Activated CD8-positive, alpha-beta memory T cell treated with anti-CD3 and anti-CD28 coated beads, Interleukin-2, amount 10 ng/mL, durations not matched to agents 7 days and 5 days (primary cell): ENCODE measurements at regions of chr17 and their contacts with region 1.

Region 1: DNA sequence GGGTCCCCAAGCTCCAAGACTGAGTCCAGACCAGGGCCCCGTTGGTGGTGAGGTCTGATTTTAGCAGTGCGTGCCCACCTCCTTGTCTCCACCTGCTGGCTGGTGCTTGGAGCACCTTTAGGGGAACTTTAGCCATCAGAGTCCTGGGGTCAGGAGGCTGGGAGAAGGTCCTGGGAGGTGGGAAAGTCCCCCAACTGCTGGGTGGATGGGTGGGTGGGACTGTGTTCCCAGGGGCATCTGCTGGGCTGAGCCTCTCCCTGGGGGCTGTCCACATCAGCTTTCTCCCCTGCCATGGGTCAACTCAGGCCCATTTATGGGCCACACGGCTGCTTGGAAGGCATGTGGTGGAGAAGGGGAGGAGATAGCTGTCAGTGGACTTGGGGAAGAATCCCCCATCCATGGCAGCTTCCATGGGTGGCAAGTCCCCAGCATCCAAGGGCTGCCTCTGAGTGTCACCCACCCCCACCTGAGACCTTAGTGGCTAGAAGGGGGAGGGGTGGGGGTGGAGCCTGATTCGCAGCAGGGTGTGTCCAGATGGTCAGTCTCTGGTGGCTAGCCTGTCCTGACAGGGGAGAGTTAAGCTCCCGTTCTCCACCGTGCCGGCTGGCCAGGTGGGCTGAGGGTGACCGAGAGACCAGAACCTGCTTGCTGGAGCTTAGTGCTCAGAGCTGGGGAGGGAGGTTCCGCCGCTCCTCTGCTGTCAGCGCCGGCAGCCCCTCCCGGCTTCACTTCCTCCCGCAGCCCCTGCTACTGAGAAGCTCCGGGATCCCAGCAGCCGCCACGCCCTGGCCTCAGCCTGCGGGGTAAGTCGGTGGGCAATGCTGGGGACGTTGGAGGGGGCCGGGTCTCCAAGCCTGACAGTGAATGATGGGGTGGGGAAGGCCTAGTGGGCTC is at the start of gene TRPV2:
- DNase-seq: peak; percentile 80
- ATAC-seq: peak; percentile 45
- H3K4me3 Mint-ChIP-seq: peak within 1 kb of the TSS; percentile 98
- H3K27ac Mint-ChIP-seq: peak within 1 kb of the TSS; percentile 99
- H3K4me1 Mint-ChIP-seq: peaks cover 51% of the 10 kb centered on the region
- H3K27me3 Mint-ChIP-seq: no peaks in the 10 kb centered on the region
- total RNA-seq, gene TRPV2: 124 to 129 TPM

Region 2: GRCh38 chr17:16380640-16381495 is 34.4 kb before region 1 on chr17 and contains the start of gene UBB:
- CTCF ChIA-PET with region 1: interaction called, 33 read pairs
- DNase-seq: peak; percentile 98
- ATAC-seq: peak; percentile 92
- H3K4me3 Mint-ChIP-seq: peak within 1 kb of the TSS; percentile 93
- H3K27ac Mint-ChIP-seq: peak within 1 kb of the TSS; percentile 97
- H3K4me1 Mint-ChIP-seq: peaks cover 33% of the 10 kb centered on the region
- H3K27me3 Mint-ChIP-seq: no peaks in the 10 kb centered on the region
- total RNA-seq, gene UBB: 1,297 to 1,567 TPM

Region 3: DNA sequence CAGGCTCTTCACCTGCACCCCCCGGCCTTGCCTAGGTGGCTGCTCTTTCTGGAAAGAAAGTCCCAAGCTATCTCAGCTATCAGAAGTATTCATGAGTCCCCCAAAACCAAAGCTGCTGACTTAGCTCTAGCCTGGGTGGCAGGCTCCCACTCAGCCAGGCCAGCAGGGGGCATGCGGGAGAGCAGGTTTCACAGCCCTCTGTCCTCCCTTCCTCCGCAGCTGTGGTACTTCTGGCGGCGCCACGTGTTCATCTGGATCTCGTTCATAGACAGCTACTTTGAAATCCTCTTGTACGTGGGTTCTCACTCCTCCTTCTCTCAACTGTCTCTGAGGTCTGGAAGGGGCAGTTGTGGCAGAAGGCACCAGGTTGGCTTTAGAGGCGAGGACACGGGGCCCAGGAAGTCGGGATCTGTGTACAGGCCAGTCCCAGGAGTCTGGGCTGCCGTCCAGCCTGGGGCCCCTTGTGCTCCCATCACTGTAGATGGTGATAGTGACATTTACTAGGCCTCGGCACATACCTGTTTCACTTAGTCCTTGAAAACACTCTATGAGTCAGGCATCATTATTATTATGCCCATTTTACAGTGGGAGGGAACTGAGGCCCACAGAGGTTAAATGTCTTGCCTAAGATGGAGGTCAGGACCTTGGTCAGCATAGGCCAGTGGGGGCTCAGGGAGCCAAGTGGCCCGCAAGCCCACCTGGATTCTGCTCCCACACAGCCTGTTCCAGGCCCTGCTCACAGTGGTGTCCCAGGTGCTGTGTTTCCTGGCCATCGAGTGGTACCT is 13.0 kb after region 1 on chr17:
- CTCF ChIA-PET with region 1: interaction called, 13 read pairs
- DNase-seq: no peak
- ATAC-seq: peak; percentile 67
- H3K4me3 Mint-ChIP-seq: no peak overlapping the region
- H3K27ac Mint-ChIP-seq: no peak overlapping the region
- H3K4me1 Mint-ChIP-seq: no peaks in the 10 kb centered on the region
- H3K27me3 Mint-ChIP-seq: no peaks in the 10 kb centered on the region

Region 4: DNA sequence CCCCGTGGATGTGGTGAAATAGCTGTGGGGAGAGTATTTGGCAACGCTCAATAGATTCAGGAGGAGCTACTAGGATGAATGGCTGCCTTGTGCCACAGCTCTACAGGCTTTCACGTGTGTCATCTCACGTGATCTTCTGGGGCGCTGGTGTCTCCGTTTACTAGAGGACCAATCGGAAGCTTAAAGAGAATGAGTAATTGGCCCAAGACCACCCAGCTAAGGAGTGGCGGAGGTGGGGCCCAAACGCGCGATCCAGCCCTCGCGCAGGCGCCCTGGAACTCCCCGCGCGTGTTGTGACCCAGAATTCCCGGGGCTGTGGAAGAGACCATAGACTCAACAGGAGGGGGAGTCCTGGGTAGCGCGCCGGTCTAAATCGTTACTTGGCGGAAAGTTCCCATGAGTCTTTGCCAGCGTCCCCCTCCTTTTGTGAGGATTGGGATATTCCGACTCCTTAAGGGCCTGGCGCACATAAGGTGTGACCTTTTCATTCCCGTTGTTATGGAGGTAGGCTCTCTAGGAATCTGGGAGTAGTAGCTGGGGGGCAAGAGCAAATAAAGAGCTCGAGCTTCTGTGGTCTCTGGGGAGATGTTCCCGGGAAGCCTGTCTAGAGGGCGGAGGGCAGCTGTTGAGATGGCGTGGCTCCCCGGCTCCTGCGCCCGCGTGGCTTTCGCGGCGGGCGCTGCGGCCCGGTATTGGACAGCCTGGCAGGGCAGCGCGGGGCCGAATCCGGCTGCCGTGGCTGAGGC is 23.5 kb after region 1 on chr17:
- CTCF ChIA-PET with region 1: interaction called, 18 read pairs
- DNase-seq: peak; percentile 98
- ATAC-seq: peak; percentile 88
- H3K4me3 Mint-ChIP-seq: peak overlapping the region; percentile 98
- H3K27ac Mint-ChIP-seq: peak overlapping the region; percentile 98
- H3K4me1 Mint-ChIP-seq: peaks cover 45% of the 10 kb centered on the region
- H3K27me3 Mint-ChIP-seq: no peaks in the 10 kb centered on the region

Region 5: GRCh38 chr17:16506188-16506587 is 90.9 kb after region 1 on chr17:
- CTCF ChIA-PET with region 1: no interaction called
- DNase-seq: no peak
- ATAC-seq: no peak
- H3K4me3 Mint-ChIP-seq: no peak overlapping the region
- H3K27ac Mint-ChIP-seq: no peak overlapping the region
- H3K4me1 Mint-ChIP-seq: no peaks in the 10 kb centered on the region
- H3K27me3 Mint-ChIP-seq: peaks cover 6% of the 10 kb centered on the region